ENCODE measurements at regions of chr10 and their contacts with region 1.

Region 1: DNA sequence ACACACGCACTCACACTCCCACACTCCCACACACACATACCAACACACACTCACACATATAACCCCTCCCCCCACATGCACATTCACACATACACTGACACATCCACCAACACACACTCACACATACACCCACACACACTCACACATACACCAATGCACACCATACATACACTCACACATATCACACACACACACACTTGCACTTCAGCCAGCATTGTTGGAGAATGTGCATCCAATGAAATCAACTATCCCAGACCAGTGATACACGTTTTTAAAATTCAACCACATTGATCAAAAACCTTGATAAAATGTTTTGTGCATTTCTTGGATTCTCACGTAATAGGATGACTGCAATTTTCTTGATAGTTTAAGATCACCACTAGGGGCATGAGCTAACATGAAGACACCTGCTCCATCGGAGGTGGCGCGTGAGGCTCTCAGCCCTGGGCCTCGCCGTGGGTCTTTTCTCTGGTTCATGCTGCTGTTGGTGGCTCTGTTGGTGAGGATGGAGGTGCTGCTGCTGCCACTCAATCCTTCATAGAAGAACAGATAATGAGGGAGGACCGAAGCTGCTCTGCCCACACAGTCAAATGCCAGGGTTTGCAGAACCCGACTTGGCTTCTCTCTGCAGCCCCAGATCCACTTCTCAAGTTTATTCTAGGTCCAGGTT is 32.2 kb upstream of the CHST15 start:
- DNase-seq: peak; percentile 62
- ATAC-seq: no peak
- H3K4me3 ChIP-seq: no peak overlapping the region
- H3K4me3 Mint-ChIP-seq: no peak overlapping the region
- H3K27ac ChIP-seq: no peak overlapping the region
- H3K27ac Mint-ChIP-seq: no peak overlapping the region
- H3K4me1 ChIP-seq: peaks cover 32 to 61% of the 10 kb centered on the region in 2 donors
- H3K4me1 Mint-ChIP-seq: peaks cover 7% of the 10 kb centered on the region
- H3K27me3 ChIP-seq: no peaks in the 10 kb centered on the region
- H3K27me3 Mint-ChIP-seq: no peaks in the 10 kb centered on the region
- CTCF ChIP-seq: peak; percentile 70

Region 2: GRCh38 chr10:124106241-124106879 is 19.2 kb before region 1 on chr10:
- CTCF ChIA-PET with region 1: interaction called, 10 read pairs
- POLR2A ChIA-PET with region 1: interaction called, 3 read pairs
- intact Hi-C with region 1: loop called (anchors 1 kb)
- DNase-seq: peak; percentile 67
- ATAC-seq: peak; percentile 83
- H3K4me3 ChIP-seq: peak overlapping the region in 3 of 5 experiments; percentile 2 to 56 (median 21)
- H3K4me3 Mint-ChIP-seq: peak overlapping the region; percentile 78
- H3K27ac ChIP-seq: peak overlapping the region; percentile 45 to 54
- H3K27ac Mint-ChIP-seq: peak overlapping the region; percentile 92
- H3K4me1 ChIP-seq: peaks cover 70 to 81% of the 10 kb centered on the region in 2 donors
- H3K4me1 Mint-ChIP-seq: peaks cover 77% of the 10 kb centered on the region
- H3K27me3 ChIP-seq: peaks cover 0 to 2% (median 0%) of the 10 kb centered on the region in 4 experiments
- H3K27me3 Mint-ChIP-seq: no peaks in the 10 kb centered on the region
- CTCF ChIP-seq: no peak

Region 3: DNA sequence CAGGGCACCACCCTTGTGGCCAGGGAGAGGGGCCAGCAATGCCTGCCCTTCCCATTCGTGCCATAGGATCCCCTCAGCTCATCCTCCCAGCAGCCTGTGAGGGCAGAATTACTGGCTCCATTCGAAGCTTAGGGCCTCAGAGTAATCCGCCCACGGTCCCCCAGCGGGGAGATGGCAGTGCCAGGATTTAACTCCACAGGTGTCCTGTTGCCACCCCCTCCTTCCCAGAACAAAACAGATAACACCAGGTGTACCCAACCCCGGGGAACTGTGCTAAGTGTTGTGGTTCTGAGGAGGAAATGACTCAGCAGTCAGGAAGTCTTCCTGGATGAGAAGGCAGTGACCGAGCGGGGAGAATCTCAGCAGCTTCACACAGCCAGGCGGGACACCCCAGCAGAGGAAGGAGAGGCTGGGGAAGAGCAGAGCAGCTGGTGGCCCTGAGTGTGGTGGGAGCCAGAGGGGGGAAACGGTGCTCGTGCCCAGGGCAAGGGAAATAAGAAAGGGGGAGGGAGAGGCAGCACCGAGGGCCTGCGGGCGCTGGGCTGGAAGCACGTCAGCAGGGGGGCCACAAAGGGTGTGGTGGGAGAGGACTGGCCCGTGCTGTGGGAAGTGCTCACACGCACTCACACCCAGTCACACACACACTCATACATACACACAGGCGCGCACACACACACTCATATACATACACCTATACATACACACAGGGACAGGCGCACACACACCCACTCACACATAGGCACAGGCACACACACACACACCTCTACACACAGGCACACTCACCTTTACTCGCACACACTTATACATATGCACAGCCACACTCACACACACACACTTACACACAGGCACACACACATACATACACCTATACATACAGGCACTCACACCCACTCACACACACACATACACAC is 27.6 kb after region 1 on chr10:
- CTCF ChIA-PET with region 1: interaction called, 4 read pairs
- POLR2A ChIA-PET with region 1: no interaction called
- intact Hi-C with region 1: loop called (anchors 2 kb)
- DNase-seq: peak; percentile 56
- ATAC-seq: peak; percentile 59
- H3K4me3 ChIP-seq: peak overlapping the region in 2 of 5 experiments; percentile 25 to 34
- H3K4me3 Mint-ChIP-seq: no peak overlapping the region
- H3K27ac ChIP-seq: no peak overlapping the region
- H3K27ac Mint-ChIP-seq: no peak overlapping the region
- H3K4me1 ChIP-seq: peaks cover 30 to 34% of the 10 kb centered on the region in 2 donors
- H3K4me1 Mint-ChIP-seq: peaks cover 15% of the 10 kb centered on the region
- H3K27me3 ChIP-seq: no peaks in the 10 kb centered on the region
- H3K27me3 Mint-ChIP-seq: no peaks in the 10 kb centered on the region
- CTCF ChIP-seq: no peak